GM10248 (cell line): ENCODE measurements at regions of chr5 and their contacts with region 1.

Region 1: GRCh38 chr5:139968547-139969261 is 74.4 kb downstream of the NRG2 start:
- DNase-seq: peak; percentile 90
- CTCF ChIP-seq: peak; percentile 100

Region 2: GRCh38 chr5:139414581-139415130 is 554.0 kb before region 1 on chr5:
- CTCF ChIA-PET with region 1: no interaction called
- POLR2A ChIA-PET with region 1: no interaction called
- DNase-seq: no peak
- CTCF ChIP-seq: no peak

Region 3: DNA sequence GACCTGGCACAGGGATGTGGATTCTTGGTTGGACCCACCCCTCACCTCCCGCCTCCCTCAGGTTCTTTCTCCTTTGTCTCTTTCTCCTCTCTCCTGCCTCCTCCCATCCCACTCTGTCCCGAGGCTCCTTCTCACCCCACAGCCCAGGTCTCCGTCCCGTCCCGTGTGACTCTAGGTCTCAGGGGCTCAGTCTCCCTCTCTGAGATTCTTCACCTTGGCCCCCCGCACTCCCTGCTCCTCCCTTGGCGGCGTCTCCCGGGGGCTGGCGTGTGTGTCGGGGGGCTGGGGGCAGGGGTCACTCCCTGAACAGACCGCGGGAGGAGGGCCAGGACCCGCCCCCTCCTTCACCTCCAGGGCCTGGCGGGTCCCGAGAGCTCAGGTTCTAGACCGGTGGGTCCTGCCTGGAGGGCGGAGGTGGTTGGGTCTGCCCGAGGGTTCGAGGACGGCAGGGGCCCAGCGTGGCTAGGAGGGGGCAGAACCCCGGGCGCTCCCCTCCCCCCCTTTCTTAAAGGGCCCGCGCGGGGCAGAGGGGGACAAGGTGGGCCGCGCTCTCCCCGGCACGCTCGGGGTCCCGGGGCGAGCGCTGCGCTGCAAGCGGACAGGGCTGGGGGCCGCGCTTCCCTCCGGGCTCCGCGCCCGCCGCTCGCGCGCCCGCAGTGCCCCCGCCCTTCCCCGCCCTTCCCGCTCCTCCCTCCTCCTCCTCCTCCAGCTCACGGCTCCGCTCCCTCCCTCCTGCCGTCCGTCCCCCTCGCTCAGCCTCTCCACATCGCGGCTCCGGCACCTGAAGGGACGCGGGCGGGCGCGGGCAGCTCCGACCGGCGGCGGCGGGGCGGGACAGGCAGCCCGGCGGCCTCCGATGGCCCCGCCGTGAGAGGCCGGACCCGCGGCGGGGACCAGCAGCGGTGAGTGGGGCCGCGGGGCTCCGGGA is 173.4 kb before region 1 on chr5 and contains the start of gene PSD2:
- CTCF ChIA-PET with region 1: interaction called, 439 read pairs
- POLR2A ChIA-PET with region 1: no interaction called
- DNase-seq: no peak
- CTCF ChIP-seq: no peak

Region 4: DNA sequence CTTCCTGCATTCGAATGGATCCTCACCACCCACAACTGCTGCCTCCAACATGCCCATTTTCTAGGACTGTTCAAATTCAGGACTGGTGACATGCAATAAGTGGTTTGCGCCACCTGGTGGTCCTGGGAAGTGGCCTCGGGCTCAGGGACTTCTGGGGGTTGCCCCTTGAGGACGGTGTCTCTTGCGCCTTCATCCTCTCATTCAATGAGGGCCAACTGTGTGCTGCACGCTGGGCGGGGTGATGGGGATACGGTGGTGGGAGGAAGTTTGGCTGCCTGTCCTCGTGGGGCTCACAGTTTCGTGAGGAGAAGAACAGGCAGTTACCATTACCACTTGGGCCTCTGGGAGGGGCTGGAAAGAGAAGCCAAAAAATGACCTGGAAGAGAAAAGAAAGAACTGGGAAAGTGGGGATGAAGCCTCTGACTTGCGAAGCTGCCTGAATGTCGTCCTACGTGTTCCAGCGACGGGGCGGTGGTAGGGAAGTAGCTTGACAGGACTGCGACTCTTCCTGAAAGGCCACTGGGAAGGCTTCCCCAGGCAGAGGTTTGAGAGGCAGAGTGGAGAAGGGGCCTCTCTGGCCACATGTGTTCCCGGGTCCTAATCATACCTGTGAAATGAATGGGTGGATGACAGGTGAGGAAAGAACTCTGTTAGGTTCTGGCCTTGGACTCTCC is 124.1 kb before region 1 on chr5:
- CTCF ChIA-PET with region 1: interaction called, 73 read pairs
- POLR2A ChIA-PET with region 1: no interaction called
- DNase-seq: peak; percentile 84
- CTCF ChIP-seq: peak; percentile 89

Region 5: DNA sequence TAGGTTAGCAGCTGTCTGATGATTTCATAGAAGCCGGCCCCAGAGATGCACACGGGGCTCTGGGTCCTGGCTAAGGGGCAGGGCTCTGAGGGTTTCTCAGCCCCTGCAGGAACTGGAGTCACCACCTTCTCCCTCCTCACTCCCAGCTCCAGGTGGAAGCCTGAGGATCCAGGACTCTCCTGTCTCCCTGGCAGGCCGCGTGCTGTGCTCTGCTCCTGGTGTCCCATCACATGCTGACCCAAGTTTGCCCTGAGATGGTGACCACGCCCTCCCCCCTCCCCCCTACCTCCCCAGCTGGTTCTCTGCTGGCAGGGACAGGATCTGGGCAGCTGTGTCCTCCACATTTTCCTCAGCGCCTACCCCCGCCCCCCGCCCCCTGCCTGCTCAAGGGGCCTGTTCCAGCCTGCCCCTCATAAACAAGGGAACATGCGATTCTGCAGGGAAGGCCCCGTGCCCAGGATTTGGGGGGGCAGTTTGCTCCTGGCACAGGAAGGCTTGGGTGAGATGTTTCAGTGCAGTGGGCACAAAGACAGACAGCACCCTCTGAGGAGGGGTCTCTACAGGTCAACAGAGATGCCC is 85.7 kb before region 1 on chr5:
- CTCF ChIA-PET with region 1: interaction called, 18 read pairs
- POLR2A ChIA-PET with region 1: no interaction called
- DNase-seq: no peak
- CTCF ChIP-seq: no peak

Region 6: DNA sequence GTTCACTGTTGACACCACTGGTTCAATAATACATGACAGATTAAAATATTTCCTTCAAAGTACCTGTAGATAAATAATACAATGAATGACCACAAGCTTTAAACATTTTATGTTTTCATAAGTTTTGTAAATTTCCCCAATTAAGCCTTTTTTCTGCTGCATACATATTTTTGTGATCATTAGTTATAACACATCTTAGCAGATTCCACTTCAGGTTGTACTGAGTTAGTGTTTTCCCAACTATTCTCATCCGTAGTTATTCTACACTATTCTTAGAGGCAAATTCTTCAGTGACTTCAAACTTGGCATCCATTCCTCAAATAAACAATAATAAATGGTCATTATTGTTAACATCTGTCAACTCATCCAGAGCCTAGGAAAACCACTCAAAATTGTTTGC is 26.5 kb before region 1 on chr5:
- CTCF ChIA-PET with region 1: interaction called, 259 read pairs
- POLR2A ChIA-PET with region 1: no interaction called
- DNase-seq: no peak
- CTCF ChIP-seq: no peak

Region 7: GRCh38 chr5:140025736-140026135 is 57.0 kb after region 1 on chr5:
- CTCF ChIA-PET with region 1: interaction called, 17 read pairs
- POLR2A ChIA-PET with region 1: no interaction called
- DNase-seq: no peak
- CTCF ChIP-seq: no peak